ENCODE measurements at regions of chr9 and their contacts with region 1.

Region 1: GRCh38 chr9:128339771-128340690 is at the start of gene SLC27A4:
- DNase-seq: peak; percentile 38 to 49
- ATAC-seq: peak; percentile 89 to 93
- H3K4me3 ChIP-seq: peak within 1 kb of the TSS; percentile 79 to 93 (median 89)
- H3K27ac ChIP-seq: peak within 1 kb of the TSS; percentile 78 to 89 (median 80)
- H3K4me1 ChIP-seq: peaks cover 5 to 15% of the 10 kb centered on the region in 2 donors
- H3K27me3 ChIP-seq: no peaks in the 10 kb centered on the region
- CTCF ChIP-seq: no peak
- POLR2A ChIP-seq: peak in 1 of 2 donors; percentile 42
- total RNA-seq, gene SLC27A4: 10.9 to 30.4 (median 26.1) TPM

Region 2: GRCh38 chr9:128136816-128137793 is 202.9 kb before region 1 on chr9:
- in situ Hi-C with region 1: no loop called
- intact Hi-C with region 1: no loop called
- DNase-seq: no peak
- ATAC-seq: no peak
- H3K4me3 ChIP-seq: no peak overlapping the region
- H3K27ac ChIP-seq: no peak overlapping the region
- H3K4me1 ChIP-seq: no peaks in the 10 kb centered on the region
- H3K27me3 ChIP-seq: no peaks in the 10 kb centered on the region
- CTCF ChIP-seq: no peak
- POLR2A ChIP-seq: no peak

Region 3: DNA sequence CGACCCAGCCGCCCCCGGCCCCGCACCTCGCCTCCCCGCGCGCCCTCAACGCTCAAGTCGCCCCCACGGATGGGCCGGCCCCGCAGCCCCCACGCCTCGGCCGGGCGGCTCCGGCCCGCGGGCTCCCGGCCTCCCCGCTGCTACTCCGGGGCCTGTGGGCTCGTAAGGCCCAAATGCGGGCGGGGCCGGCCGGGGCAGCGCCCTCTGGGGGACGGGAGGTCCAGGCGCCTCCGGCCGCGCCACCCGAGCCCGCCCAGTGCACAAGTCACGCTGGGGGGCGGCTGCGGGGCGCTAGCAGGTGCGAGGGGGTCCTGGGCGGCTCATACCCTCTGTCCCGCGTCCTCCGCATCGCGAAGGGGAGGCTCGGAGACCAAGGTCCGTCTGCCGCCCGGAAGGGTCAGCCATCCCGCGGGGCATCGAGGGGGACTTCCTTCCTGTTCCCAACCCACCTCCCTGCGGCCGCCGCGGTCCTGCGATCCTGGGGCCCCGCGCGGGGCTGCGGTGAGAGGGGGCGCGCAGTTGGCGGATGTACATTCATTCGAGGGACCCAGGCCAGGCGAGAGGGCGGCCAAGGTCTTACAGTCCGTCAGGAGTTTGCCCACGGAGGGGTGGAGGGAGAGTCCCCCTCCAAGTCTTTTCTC is 148.5 kb before region 1 on chr9 and contains the start of gene CIZ1:
- in situ Hi-C with region 1: loop called in 1 of 4 experiments (anchors 25 kb)
- intact Hi-C with region 1: no loop called
- DNase-seq: peak; percentile 52 to 74
- ATAC-seq: peak; percentile 79 to 83
- H3K4me3 ChIP-seq: peak within 1 kb of the TSS; percentile 72 to 92 (median 80)
- H3K27ac ChIP-seq: peak within 1 kb of the TSS; percentile 73 to 93 (median 90)
- H3K4me1 ChIP-seq: peaks cover 10 to 15% of the 10 kb centered on the region in 2 donors
- H3K27me3 ChIP-seq: no peaks in the 10 kb centered on the region
- CTCF ChIP-seq: peak; percentile 65 to 96 (median 76)
- POLR2A ChIP-seq: peak in 1 of 2 donors; percentile 47
- total RNA-seq, gene CIZ1: 47.8 to 61.3 (median 53.0) TPM

Region 4: GRCh38 chr9:128275996-128276573 is 63.9 kb before region 1 on chr9 and contains the starts of genes GOLGA2 and SWI5:
- in situ Hi-C with region 1: no loop called
- intact Hi-C with region 1: loop called (anchors 1 kb)
- DNase-seq: peak; percentile 100
- ATAC-seq: peak; percentile 94 to 97
- H3K4me3 ChIP-seq: peak within 1 kb of the TSS; percentile 85 to 99 (median 94)
- H3K27ac ChIP-seq: peak within 1 kb of the TSS; percentile 91 to 93 (median 92)
- H3K4me1 ChIP-seq: peaks cover 19 to 29% of the 10 kb centered on the region in 2 donors
- H3K27me3 ChIP-seq: no peaks in the 10 kb centered on the region
- CTCF ChIP-seq: no peak
- POLR2A ChIP-seq: peak; percentile 91 to 95
- total RNA-seq, gene GOLGA2: 68.9 to 84.6 (median 78.5) TPM
- total RNA-seq, gene SWI5: 12.7 to 23.8 (median 13.5) TPM

Region 5: GRCh38 chr9:128296337-128297220 is 43.5 kb before region 1 on chr9:
- in situ Hi-C with region 1: no loop called
- intact Hi-C with region 1: loop called (anchors 1 kb)
- DNase-seq: no peak
- ATAC-seq: no peak
- H3K4me3 ChIP-seq: no peak overlapping the region
- H3K27ac ChIP-seq: no peak overlapping the region
- H3K4me1 ChIP-seq: no peaks in the 10 kb centered on the region
- H3K27me3 ChIP-seq: no peaks in the 10 kb centered on the region
- CTCF ChIP-seq: no peak
- POLR2A ChIP-seq: no peak

Region 6: GRCh38 chr9:128309551-128309950 is 30.5 kb before region 1 on chr9:
- in situ Hi-C with region 1: no loop called
- intact Hi-C with region 1: no loop called
- DNase-seq: no peak
- ATAC-seq: no peak
- H3K4me3 ChIP-seq: no peak overlapping the region
- H3K27ac ChIP-seq: no peak overlapping the region
- H3K4me1 ChIP-seq: peaks cover 0 to 8% of the 10 kb centered on the region in 2 donors
- H3K27me3 ChIP-seq: no peaks in the 10 kb centered on the region
- CTCF ChIP-seq: no peak
- POLR2A ChIP-seq: no peak

Region 7: GRCh38 chr9:128322404-128323211 is 17.4 kb before region 1 on chr9 and contains the starts of genes COQ4 and TRUB2:
- in situ Hi-C with region 1: no loop called
- intact Hi-C with region 1: loop called (anchors 1 kb)
- DNase-seq: peak; percentile 91 to 92
- ATAC-seq: peak; percentile 99
- H3K4me3 ChIP-seq: peak within 1 kb of the TSS; percentile 75 to 97 (median 94)
- H3K27ac ChIP-seq: peak within 1 kb of the TSS; percentile 83 to 95 (median 92)
- H3K4me1 ChIP-seq: peaks cover 16 to 35% of the 10 kb centered on the region in 2 donors
- H3K27me3 ChIP-seq: no peaks in the 10 kb centered on the region
- CTCF ChIP-seq: peak in 1 of 5 experiments; percentile 18
- POLR2A ChIP-seq: no peak
- total RNA-seq, gene COQ4: 25.1 to 42.4 (median 34.3) TPM
- total RNA-seq, gene TRUB2: 7.1 to 18.1 (median 14.3) TPM